Common myeloid progenitor, CD34-positive (primary cell): ENCODE measurements at regions of chr9 and their contacts with region 1.

Region 1: GRCh38 chr9:8486095-8486494 is 686.5 kb upstream of the DMAC1 start:
- DNase-seq: peak; percentile 73 to 75 (median 74)
- H3K4me3 ChIP-seq: no peak overlapping the region
- H3K27ac ChIP-seq: no peak overlapping the region
- H3K4me1 ChIP-seq: no peaks in the 10 kb centered on the region
- H3K27me3 ChIP-seq: no peaks in the 10 kb centered on the region

Region 2: GRCh38 chr9:8447601-8448000 is 38.5 kb before region 1 on chr9:
- CTCF ChIA-PET with region 1: no interaction called
- POLR2A ChIA-PET with region 1: no interaction called
- DNase-seq: no peak
- H3K4me3 ChIP-seq: no peak overlapping the region
- H3K27ac ChIP-seq: no peak overlapping the region
- H3K4me1 ChIP-seq: no peaks in the 10 kb centered on the region
- H3K27me3 ChIP-seq: no peaks in the 10 kb centered on the region

Region 3: DNA sequence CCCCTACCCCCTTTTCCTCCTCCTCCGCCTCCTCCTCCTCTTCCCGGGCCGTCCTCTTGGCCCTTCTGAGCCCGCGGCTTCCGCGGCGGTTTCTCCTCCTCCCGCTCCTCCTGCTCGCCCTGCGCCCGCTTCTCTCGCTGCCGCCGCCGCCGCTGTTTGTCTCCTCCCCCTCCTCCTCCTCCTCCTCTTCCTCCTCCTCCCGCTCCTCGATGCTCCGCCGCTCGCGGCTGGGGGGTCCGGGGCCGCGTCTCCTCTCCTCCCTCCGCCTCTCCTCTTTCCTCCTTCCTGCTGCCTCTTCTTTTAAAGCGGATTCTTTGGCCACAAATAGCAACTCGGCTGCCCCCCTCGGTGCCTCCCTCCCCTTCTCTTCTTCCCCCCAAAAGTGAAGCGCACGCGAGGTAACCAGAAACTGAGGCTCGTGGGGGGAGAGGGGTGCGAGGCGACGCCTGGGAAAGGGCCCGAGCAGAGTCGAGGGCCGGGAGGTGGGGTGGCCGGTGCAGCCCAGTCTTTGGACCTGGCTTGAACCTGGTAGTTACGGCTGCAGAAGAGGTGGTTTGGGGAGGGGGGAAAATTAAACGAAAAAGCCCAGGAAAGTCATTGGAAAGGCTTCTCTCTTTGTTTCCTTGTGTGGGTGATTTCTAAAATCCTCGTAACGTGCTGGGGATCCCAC is 372.0 kb after region 1 on chr9:
- CTCF ChIA-PET with region 1: interaction called, 30 read pairs
- POLR2A ChIA-PET with region 1: no interaction called
- DNase-seq: peak in 2 of 3 donors; percentile 45 to 54
- H3K4me3 ChIP-seq: peak overlapping the region; percentile 58 to 90 (median 81)
- H3K27ac ChIP-seq: no peak overlapping the region
- H3K4me1 ChIP-seq: peaks cover 9 to 21% (median 16%) of the 10 kb centered on the region in 4 experiments
- H3K27me3 ChIP-seq: peaks cover 0 to 34% (median 7%) of the 10 kb centered on the region in 5 experiments

Region 4: DNA sequence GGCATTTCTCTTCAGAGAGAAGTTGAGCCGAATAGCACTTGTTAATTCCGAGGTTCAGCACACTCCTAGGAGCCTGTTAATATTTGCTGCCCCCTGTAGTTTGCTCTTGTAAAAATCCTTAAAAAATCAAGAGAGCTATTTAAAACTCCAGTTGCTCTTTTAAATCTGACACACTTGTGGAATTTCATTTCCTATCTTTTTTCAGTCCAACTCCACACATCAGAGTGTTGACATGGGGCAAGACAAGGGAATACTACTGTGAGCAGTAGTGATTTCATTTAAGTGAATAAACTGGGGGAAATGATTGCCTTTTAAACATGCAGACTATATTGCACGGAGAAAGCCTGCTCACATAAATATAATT is 409.7 kb after region 1 on chr9:
- CTCF ChIA-PET with region 1: interaction called, 21 read pairs
- POLR2A ChIA-PET with region 1: no interaction called
- DNase-seq: peak; percentile 52 to 75 (median 63)
- H3K4me3 ChIP-seq: no peak overlapping the region
- H3K27ac ChIP-seq: no peak overlapping the region
- H3K4me1 ChIP-seq: peaks cover 0 to 1% (median 0%) of the 10 kb centered on the region in 4 experiments
- H3K27me3 ChIP-seq: no peaks in the 10 kb centered on the region